Heart left ventricle (tissue), 16 donors: ENCODE measurements at regions of chr9 and their contacts with region 1.

Region 1: DNA sequence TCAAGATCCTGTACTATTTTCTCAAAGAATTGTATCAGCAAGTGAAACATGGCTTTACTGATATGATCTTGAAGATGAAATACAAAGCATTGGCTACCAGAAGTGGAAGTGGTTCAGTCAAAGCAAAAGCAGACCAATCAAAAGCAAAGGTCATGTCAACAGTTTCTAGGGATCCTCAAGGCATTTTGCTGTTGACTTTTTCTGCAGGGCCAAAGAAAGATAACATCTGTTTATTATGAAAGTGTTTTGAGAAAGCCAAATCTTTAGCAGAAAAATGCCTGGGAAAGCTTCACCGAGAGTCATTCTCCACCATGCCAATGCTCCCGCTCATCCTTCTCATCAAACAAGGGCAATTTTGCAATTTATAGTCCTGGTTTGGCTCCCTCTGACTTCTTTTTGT is 90.3 kb upstream of the ACO1 start:
- DNase-seq: no peak
- ATAC-seq: no peak
- H3K4me3 ChIP-seq: no peak overlapping the region
- H3K27ac ChIP-seq: no peak overlapping the region
- H3K4me1 ChIP-seq: no peaks in the 10 kb centered on the region
- H3K27me3 ChIP-seq: no peaks in the 10 kb centered on the region
- CTCF ChIP-seq: no peak
- POLR2A ChIP-seq: no peak

Region 2: GRCh38 chr9:32234451-32234850 is 59.7 kb before region 1 on chr9:
- intact Hi-C with region 1: loop called in 1 of 10 experiments (anchors 10 kb)
- DNase-seq: no peak
- ATAC-seq: no peak
- H3K4me3 ChIP-seq: no peak overlapping the region
- H3K27ac ChIP-seq: no peak overlapping the region
- H3K4me1 ChIP-seq: no peaks in the 10 kb centered on the region
- H3K27me3 ChIP-seq: no peaks in the 10 kb centered on the region
- CTCF ChIP-seq: no peak
- POLR2A ChIP-seq: no peak

Region 3: GRCh38 chr9:32500768-32501167 is 206.7 kb after region 1 on chr9:
- intact Hi-C with region 1: no loop called
- DNase-seq: no peak
- ATAC-seq: no peak
- H3K4me3 ChIP-seq: no peak overlapping the region
- H3K27ac ChIP-seq: no peak overlapping the region
- H3K4me1 ChIP-seq: no peaks in the 10 kb centered on the region
- H3K27me3 ChIP-seq: no peaks in the 10 kb centered on the region
- CTCF ChIP-seq: no peak
- POLR2A ChIP-seq: no peak